ENCODE measurements at regions of chr6 and their contacts with region 1.

Region 1: GRCh38 chr6:47787620-47788497 is 6.0 kb downstream of the OPN5 start:
- DNase-seq: peak; percentile 25
- H3K4me3 Mint-ChIP-seq: no peak overlapping the region
- H3K27ac Mint-ChIP-seq: no peak overlapping the region
- H3K4me1 Mint-ChIP-seq: peaks cover 6% of the 10 kb centered on the region
- H3K27me3 Mint-ChIP-seq: peaks cover 36% of the 10 kb centered on the region

Region 2: GRCh38 chr6:47759364-47759763 is 28.5 kb before region 1 on chr6:
- intact Hi-C with region 1: no loop called
- DNase-seq: no peak
- H3K4me3 Mint-ChIP-seq: no peak overlapping the region
- H3K27ac Mint-ChIP-seq: no peak overlapping the region
- H3K4me1 Mint-ChIP-seq: no peaks in the 10 kb centered on the region
- H3K27me3 Mint-ChIP-seq: peaks cover 2% of the 10 kb centered on the region

Region 3: GRCh38 chr6:48765352-48765961 is 977.6 kb after region 1 on chr6:
- intact Hi-C with region 1: loop called (anchors 5 kb)
- DNase-seq: no peak
- H3K4me3 Mint-ChIP-seq: no peak overlapping the region
- H3K27ac Mint-ChIP-seq: no peak overlapping the region
- H3K4me1 Mint-ChIP-seq: no peaks in the 10 kb centered on the region
- H3K27me3 Mint-ChIP-seq: no peaks in the 10 kb centered on the region

Region 4: GRCh38 chr6:49409951-49410542 is 1622.2 kb after region 1 on chr6:
- intact Hi-C with region 1: loop called (anchors 1 kb)
- DNase-seq: peak; percentile 29
- H3K4me3 Mint-ChIP-seq: no peak overlapping the region
- H3K27ac Mint-ChIP-seq: no peak overlapping the region
- H3K4me1 Mint-ChIP-seq: no peaks in the 10 kb centered on the region
- H3K27me3 Mint-ChIP-seq: no peaks in the 10 kb centered on the region